OCI-LY7 (cell line): ENCODE measurements at regions of chr7 and their contacts with region 1.

Region 1: DNA sequence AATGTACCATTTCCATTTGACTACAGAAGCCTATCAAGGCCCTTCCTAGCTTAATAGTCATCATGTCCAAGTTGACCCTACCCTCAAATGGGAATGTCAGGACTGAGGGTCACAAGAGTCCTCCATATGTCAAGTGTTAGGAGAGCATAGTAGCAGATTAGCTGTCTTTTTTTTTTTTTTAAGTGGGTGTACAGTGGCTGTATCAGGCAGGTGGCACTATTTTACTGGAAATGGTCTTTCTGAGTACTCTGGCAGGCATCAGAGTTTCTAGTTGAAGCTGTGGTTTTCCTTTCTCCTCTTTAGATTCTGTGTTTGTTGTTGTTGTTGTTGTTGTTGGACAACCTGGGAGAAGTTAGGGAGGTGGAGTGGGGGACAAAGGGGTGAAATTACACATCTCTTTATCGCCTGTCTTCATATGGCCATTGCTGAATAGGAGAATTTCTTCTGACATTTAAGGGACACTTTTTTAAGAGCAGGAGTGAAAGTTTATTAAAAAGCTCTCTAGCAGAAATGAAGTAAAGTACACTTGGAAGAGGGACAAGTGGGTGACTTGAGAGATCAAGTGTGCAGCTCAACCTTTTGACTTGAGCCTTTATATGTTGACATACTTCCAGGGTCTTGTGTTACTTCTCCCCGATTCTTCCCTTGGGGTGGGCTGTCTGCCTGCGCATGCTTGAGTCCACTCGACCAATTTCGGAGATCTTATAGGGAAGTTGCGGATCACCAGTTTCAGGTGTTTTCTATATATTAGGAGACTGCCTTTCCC is 104.1 kb upstream of the FOXP2 start:
- DNase-seq: no peak
- H3K4me3 ChIP-seq: no peak overlapping the region
- H3K27ac ChIP-seq: no peak overlapping the region
- H3K4me1 ChIP-seq: no peaks in the 10 kb centered on the region
- CTCF ChIP-seq: 0 out of 2 replicates have a peak, but pooled peaks have one; percentile 10

Region 2: DNA sequence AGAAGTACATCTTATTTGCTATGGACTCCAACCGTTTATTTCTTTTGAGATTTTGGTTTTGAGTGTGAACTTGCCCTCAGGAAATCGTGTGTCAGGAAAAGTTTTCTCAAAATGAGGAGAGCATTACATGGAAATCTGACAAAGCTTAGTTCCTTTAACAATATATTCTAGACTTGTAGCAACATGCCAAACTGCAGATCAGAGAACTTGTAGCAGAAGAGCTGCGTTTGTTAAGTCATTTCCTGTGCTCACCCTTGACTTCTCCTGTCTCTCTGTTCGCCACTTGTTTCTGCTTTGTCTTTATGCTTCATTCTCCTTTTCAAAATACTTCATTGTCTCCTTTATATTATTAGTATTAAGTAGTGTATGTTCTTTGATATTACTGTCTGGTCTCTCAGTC is 12.5 kb before region 1 on chr7:
- CTCF ChIA-PET with region 1: no interaction called
- POLR2A ChIA-PET with region 1: interaction called, 11 read pairs
- intact Hi-C with region 1: no loop called
- DNase-seq: no peak
- H3K4me3 ChIP-seq: no peak overlapping the region
- H3K27ac ChIP-seq: no peak overlapping the region
- H3K4me1 ChIP-seq: no peaks in the 10 kb centered on the region
- CTCF ChIP-seq: no peak